ENCODE measurements at regions of chr17 and their contacts with region 1.

Region 1: GRCh38 chr17:28644985-28645939 is at the start of gene BLTP2:
- DNase-seq: peak; percentile 98
- ATAC-seq: peak; percentile 98
- H3K4me3 Mint-ChIP-seq: peak within 1 kb of the TSS; percentile 95
- H3K27ac Mint-ChIP-seq: peak within 1 kb of the TSS; percentile 87
- H3K4me1 Mint-ChIP-seq: peaks cover 38% of the 10 kb centered on the region
- H3K27me3 Mint-ChIP-seq: no peaks in the 10 kb centered on the region
- total RNA-seq, gene BLTP2: 138 to 152 TPM

Region 2: DNA sequence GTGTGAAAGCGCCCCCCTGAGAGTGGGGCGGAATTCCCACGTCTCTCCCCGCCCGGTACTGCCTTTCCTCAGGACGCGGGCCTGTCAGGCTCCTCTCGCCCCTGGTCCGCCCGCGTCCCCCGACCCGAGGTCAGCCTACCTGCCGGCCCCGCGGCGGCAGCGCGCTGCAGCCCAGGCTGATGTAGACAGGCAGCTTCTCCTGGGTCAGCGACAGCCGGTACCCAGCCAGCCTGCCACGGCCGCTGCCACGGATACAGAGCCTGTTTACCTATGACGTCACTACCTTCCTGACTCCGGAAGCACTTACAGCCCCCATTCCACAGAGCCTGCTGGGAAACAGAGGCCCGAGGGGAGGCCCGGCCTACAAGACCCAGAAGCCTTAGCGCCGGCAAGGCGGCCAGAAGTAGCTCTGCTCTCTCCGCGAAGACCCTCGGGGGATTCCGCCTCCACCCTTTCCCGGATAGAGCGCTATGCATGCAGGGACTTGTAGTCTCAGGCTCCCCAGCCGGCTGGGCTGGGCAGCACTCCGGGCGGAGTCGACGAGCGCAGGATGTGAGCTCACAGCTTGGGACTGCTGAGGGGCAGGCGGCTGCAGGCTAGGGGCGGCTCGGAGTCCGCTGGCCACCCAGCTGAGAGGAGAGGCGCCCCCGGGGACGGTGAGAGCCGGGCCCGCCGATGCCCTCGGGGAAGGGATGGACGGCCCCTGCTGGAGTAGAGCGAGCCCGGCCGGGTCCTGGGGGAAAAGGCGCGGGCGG is 309.9 kb before region 1 on chr17 and contains the starts of genes IFT20 and TNFAIP1:
- CTCF ChIA-PET with region 1: no interaction called
- POLR2A ChIA-PET with region 1: no interaction called
- intact Hi-C with region 1: loop called in 1 of 2 experiments (anchors 1 kb)
- DNase-seq: peak; percentile 99
- ATAC-seq: peak; percentile 97
- H3K4me3 Mint-ChIP-seq: peak within 1 kb of the TSS; percentile 96
- H3K27ac Mint-ChIP-seq: peak within 1 kb of the TSS; percentile 91
- H3K4me1 Mint-ChIP-seq: peaks cover 36% of the 10 kb centered on the region
- H3K27me3 Mint-ChIP-seq: no peaks in the 10 kb centered on the region
- total RNA-seq, gene IFT20: 12.9 to 17.3 TPM
- total RNA-seq, gene TNFAIP1: 25.5 to 26.1 TPM

Region 3: GRCh38 chr17:28571255-28572122 is 73.8 kb before region 1 on chr17 and contains the start of gene PIGS:
- CTCF ChIA-PET with region 1: interaction called, 4 read pairs
- POLR2A ChIA-PET with region 1: interaction called, 6 read pairs
- intact Hi-C with region 1: loop called in 1 of 2 experiments (anchors 2 kb)
- DNase-seq: peak; percentile 96
- ATAC-seq: peak; percentile 99
- H3K4me3 Mint-ChIP-seq: peak within 1 kb of the TSS; percentile 95
- H3K27ac Mint-ChIP-seq: peak within 1 kb of the TSS; percentile 94
- H3K4me1 Mint-ChIP-seq: peaks cover 51% of the 10 kb centered on the region
- H3K27me3 Mint-ChIP-seq: no peaks in the 10 kb centered on the region
- total RNA-seq, gene PIGS: 38.7 to 41.4 TPM

Region 4: GRCh38 chr17:28623696-28624095 is 21.6 kb before region 1 on chr17:
- CTCF ChIA-PET with region 1: interaction called, 13 read pairs
- POLR2A ChIA-PET with region 1: interaction called, 3 read pairs
- intact Hi-C with region 1: no loop called
- DNase-seq: no peak
- ATAC-seq: no peak
- H3K4me3 Mint-ChIP-seq: no peak overlapping the region
- H3K27ac Mint-ChIP-seq: no peak overlapping the region
- H3K4me1 Mint-ChIP-seq: peaks cover 9% of the 10 kb centered on the region
- H3K27me3 Mint-ChIP-seq: no peaks in the 10 kb centered on the region

Region 5: DNA sequence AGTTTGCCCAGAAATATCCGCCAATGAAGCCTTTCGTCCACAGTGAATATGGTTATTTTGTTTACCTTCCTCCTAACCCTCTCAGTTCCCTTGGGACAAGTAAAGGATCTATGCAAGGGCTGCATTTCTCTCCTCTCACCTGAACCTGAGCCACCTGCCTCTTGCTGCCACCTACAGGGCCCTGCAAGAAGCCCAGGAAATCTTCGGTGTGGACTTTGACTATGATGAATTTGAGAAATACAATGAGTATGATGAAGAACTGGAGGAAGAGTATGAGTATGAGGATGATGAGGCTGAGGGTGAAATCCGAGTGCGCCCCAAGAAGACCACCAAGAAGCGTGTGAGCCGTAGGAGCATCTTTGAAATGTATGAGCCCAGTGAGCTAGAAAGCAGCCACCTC is 30.7 kb after region 1 on chr17:
- CTCF ChIA-PET with region 1: interaction called, 26 read pairs
- POLR2A ChIA-PET with region 1: interaction called, 6 read pairs
- intact Hi-C with region 1: no loop called
- DNase-seq: peak; percentile 22
- ATAC-seq: peak; percentile 33
- H3K4me3 Mint-ChIP-seq: no peak overlapping the region
- H3K27ac Mint-ChIP-seq: no peak overlapping the region
- H3K4me1 Mint-ChIP-seq: no peaks in the 10 kb centered on the region
- H3K27me3 Mint-ChIP-seq: no peaks in the 10 kb centered on the region

Region 6: DNA sequence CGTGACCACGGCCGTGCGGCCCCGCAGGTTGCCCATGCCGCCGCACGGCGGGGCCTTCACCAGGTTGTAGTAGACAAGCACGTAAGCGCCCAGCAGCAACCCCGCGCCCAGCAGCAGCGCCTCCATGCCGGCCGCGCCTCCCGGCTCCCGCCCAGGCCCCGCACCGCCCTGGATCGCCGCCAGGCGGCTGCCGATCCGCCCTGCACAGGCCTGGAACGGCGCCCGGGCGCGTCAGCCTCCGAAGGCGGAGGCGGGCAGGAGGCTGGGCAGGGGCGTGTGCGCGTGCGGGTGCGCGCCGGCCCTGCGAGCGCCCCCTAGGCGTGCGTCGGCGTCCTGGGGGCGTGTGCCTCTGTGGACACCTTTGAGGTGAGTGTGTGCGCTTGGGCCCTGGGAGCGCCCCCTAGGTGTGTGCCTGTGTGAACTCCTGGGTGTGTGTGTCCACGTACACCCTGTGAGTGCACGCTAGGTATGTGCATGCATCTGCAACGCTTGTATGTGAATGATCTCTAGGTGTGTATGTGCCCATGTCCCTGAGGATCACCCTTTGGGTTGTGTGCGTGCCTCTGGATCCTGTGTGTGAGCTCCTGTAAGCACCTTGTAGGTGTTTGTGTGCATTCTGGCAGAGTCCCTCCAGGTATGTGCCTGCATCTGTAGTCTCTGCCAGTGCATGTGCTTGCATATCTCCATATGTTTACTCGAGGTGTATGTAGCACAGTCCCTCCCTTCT is 257.7 kb after region 1 on chr17 and contains the start of gene DHRS13:
- CTCF ChIA-PET with region 1: no interaction called
- POLR2A ChIA-PET with region 1: no interaction called
- intact Hi-C with region 1: loop called in 1 of 2 experiments (anchors 1 kb)
- DNase-seq: peak; percentile 97
- ATAC-seq: peak; percentile 89
- H3K4me3 Mint-ChIP-seq: peak within 1 kb of the TSS; percentile 87
- H3K27ac Mint-ChIP-seq: peak within 1 kb of the TSS; percentile 92
- H3K4me1 Mint-ChIP-seq: peaks cover 34% of the 10 kb centered on the region
- H3K27me3 Mint-ChIP-seq: no peaks in the 10 kb centered on the region
- total RNA-seq, gene DHRS13: 23.3 to 29.5 TPM